Activated CD4-positive, alpha-beta memory T cell treated with anti-CD3 and anti-CD28 coated beads, Interleukin-2, amount 10 ng/mL, durations not matched to agents 7 days and 5 days (primary cell): ENCODE measurements at regions of chr3 and their contacts with region 1.

Region 1: GRCh38 chr3:88058591-88059368 is at the starts of genes CGGBP1 and ZNF654:
- DNase-seq: peak; percentile 99
- H3K4me3 Mint-ChIP-seq: peak within 1 kb of the TSS; percentile 99
- H3K27ac Mint-ChIP-seq: peak within 1 kb of the TSS; percentile 95
- H3K4me1 Mint-ChIP-seq: peaks cover 51% of the 10 kb centered on the region
- H3K27me3 Mint-ChIP-seq: no peaks in the 10 kb centered on the region
- total RNA-seq, gene CGGBP1: 105 to 118 TPM
- total RNA-seq, gene ZNF654: 26.5 to 27.4 TPM

Region 2: DNA sequence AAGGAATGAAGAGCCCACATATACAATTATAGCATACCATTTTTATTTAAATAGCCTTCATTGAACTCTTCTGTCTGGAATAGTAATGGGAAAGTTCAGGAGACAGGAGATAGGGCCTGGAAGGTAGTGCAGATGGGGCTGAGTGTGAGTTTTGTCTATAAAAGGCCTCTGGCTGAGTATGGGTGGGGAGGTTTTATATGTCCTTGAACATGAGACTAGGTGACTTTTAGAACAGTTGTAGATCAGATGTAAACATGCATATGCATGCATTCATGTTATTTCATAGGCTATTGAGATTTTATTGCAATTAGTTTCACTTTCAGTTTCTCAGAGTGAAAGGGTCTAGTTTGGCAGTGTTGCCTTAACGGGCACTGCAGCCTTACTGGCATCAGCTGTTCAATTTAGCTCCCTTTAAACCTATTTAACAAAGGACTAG is 27.1 kb before region 1 on chr3:
- CTCF ChIA-PET with region 1: interaction called, 4 read pairs
- POLR2A ChIA-PET with region 1: interaction called, 55 read pairs
- DNase-seq: peak; percentile 25
- H3K4me3 Mint-ChIP-seq: peak overlapping the region; percentile 89
- H3K27ac Mint-ChIP-seq: peak overlapping the region; percentile 87
- H3K4me1 Mint-ChIP-seq: peaks cover 32% of the 10 kb centered on the region
- H3K27me3 Mint-ChIP-seq: no peaks in the 10 kb centered on the region

Region 3: DNA sequence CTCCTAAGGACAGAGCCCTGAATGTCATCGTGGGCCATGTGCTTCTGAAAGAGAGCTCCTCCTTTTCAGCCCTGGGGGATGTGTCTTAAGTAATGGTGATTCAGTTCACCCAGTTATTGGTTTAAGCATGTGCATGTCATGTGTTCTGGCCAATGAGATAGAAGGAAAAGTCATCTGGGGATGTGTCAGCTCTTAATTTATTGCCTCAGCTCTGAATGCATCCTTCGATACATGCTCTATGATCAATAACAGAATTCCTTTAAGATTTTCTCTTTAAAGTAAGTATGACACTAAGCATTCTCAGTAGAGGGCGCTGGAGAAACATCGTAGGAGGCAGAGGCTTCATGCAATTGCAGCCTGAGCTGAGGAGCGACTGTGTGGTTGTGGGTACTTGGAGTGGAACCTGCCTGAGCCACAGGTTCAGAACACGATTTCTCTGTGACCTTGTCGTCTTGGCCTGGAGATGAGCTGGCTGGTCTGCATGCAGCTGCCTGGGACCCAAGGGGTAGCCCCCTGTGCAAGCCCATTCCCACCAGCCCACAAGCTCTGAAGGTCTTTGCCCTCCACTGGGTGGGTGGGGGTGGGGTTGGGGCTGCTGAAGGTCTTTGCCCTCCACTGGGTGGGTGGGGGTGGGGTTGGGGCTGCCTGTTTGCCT is 160.5 kb after region 1 on chr3:
- CTCF ChIA-PET with region 1: no interaction called
- POLR2A ChIA-PET with region 1: no interaction called
- DNase-seq: peak; percentile 28
- H3K4me3 Mint-ChIP-seq: no peak overlapping the region
- H3K27ac Mint-ChIP-seq: no peak overlapping the region
- H3K4me1 Mint-ChIP-seq: no peaks in the 10 kb centered on the region
- H3K27me3 Mint-ChIP-seq: peaks cover 2% of the 10 kb centered on the region